ENCODE measurements at regions of chr3 and their contacts with region 1.

Region 1: GRCh38 chr3:54427941-54428871 is 305.9 kb downstream of the CACNA2D3 start:
- DNase-seq: peak; percentile 53
- H3K4me3 ChIP-seq: no peak overlapping the region
- H3K27ac ChIP-seq: peak overlapping the region in 1 of 4 donors; percentile 2
- H3K4me1 ChIP-seq: peaks cover 0 to 6% (median 2%) of the 10 kb centered on the region in 4 donors
- H3K27me3 ChIP-seq: no peaks in the 10 kb centered on the region
- CTCF ChIP-seq: peak; percentile 71 to 85 (median 76)
- EP300 ChIP-seq: no peak
- POLR2A ChIP-seq: no peak

Region 2: DNA sequence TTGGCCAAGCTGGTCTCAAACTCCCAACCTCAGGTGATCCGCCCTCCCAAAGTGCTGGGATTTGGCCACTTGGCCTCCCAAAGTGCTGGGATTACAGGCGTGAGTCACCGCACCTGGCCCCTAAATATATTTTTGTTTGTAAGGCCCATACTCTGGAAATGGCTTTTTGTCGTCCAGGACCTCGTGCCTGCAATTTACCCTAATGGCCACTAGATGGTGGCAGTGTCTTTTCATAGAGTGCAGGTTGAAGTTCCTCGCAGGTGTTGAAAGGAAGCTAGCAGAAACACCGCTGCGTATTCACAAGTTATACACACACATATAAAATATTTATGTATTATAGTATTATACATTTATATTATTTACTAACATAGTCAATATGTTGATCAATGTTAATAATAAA is 402.5 kb after region 1 on chr3:
- in situ Hi-C with region 1: loop called in 1 of 4 experiments (anchors 25 kb)
- intact Hi-C with region 1: no loop called
- DNase-seq: no peak
- H3K4me3 ChIP-seq: no peak overlapping the region
- H3K27ac ChIP-seq: no peak overlapping the region
- H3K4me1 ChIP-seq: no peaks in the 10 kb centered on the region
- H3K27me3 ChIP-seq: no peaks in the 10 kb centered on the region
- CTCF ChIP-seq: peak; percentile 31 to 54 (median 45)
- EP300 ChIP-seq: no peak
- POLR2A ChIP-seq: no peak

Measured in transverse colon (tissue), 4 donors.